ENCODE measurements at regions of chr4 and their contacts with region 1.

Region 1: GRCh38 chr4:38902695-38903094 is 35.1 kb downstream of the FAM114A1 start:
- DNase-seq: no peak
- H3K4me3 ChIP-seq: no peak overlapping the region
- H3K27ac ChIP-seq: no peak overlapping the region
- H3K4me1 ChIP-seq: peaks cover 0 to 5% (median 0%) of the 10 kb centered on the region in 6 donors
- H3K27me3 ChIP-seq: no peaks in the 10 kb centered on the region
- CTCF ChIP-seq: peak in 9 of 11 experiments; percentile 25 to 45 (median 40)
- POLR2A ChIP-seq: no peak

Region 2: GRCh38 chr4:39062094-39062769 is 159.5 kb after region 1 on chr4 and contains the start of gene KLHL5:
- intact Hi-C with region 1: no loop called
- DNase-seq: no peak
- H3K4me3 ChIP-seq: no peak within 1 kb of the TSS
- H3K27ac ChIP-seq: no peak within 1 kb of the TSS
- H3K4me1 ChIP-seq: peaks cover 0 to 33% (median 5%) of the 10 kb centered on the region in 6 donors
- H3K27me3 ChIP-seq: no peaks in the 10 kb centered on the region
- CTCF ChIP-seq: no peak
- POLR2A ChIP-seq: no peak
- total RNA-seq, gene KLHL5: 32.1 to 46.9 (median 40.4) TPM

Region 3: GRCh38 chr4:39134683-39135319 is 232.1 kb after region 1 on chr4:
- intact Hi-C with region 1: loop called (anchors 5 kb)
- DNase-seq: no peak
- H3K4me3 ChIP-seq: peak overlapping the region in 1 of 8 donors; percentile 21
- H3K27ac ChIP-seq: no peak overlapping the region
- H3K4me1 ChIP-seq: peaks cover 0 to 15% (median 8%) of the 10 kb centered on the region in 6 donors
- H3K27me3 ChIP-seq: no peaks in the 10 kb centered on the region
- CTCF ChIP-seq: no peak
- POLR2A ChIP-seq: no peak